Mammary epithelial cell (primary cell): ENCODE measurements at regions of chr6 and their contacts with region 1.

Region 1: DNA sequence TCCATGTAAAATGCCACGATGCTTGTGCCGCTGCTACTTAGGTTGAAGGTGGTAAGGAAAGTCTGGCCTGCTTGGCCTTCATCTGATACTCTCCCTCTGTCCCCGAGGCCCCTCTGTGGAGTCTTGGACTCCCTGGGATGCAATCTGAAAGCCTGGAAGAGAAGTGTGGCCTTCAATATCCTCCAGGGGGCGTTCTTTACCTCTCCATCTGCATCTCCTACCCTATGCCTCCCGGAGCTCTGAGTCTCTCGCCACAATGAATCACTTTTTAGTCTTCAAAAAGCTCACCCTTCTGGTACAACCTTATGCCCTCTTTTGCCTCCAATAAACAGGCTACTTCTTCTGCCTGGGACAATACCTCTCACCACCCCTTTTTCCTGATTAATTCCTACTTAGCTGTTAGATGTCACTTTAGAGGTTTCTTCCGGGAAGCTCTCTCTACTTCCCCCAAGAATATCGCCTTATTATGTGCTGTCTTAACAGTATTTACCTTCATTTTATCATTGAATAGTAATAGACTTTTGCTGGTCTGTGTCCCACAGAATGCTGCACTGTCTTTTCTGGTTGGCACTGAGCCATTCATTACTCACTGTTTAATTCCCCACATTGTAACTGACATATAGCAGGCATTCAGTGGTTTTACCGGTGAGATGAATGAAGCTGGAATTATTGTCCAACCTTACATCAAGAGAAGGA is 13.9 kb upstream of the ATG5 start:
- DNase-seq: peak; percentile 86
- H3K4me3 ChIP-seq: no peak overlapping the region
- H3K27ac ChIP-seq: peak overlapping the region; percentile 13
- H3K4me1 ChIP-seq: peaks cover 13% of the 10 kb centered on the region
- H3K27me3 ChIP-seq: no peaks in the 10 kb centered on the region
- CTCF ChIP-seq: peak; percentile 82 to 91

Region 2: DNA sequence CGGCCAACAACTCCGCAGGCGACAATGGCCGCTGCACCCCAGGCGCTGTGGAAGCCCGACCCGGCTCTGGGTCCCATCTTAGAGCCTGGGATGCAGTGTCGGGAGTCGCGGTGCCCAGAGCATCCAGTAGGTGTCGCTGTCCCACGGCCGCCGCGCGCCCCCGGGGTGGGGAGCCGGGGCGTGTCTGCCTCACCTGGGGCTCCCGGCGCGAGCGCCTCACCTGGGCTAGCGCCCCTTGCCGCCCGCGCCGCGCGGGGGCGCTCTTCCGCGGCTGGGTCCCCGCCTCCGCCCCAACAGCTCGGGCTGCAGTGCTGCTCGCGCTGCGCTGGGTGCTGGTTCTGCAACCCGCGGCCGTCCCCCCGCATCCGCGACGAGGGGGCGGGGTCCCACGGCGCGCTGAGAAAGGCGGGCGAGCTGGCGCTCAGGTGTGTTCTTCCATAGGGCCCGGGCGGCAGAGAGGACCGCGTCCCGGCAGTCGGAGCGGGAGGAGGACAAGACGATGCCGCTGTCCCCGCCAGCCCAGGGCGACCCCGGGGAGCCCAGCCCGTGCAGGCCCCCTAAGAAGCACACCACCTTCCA is 21.0 kb after region 1 on chr6 and contains the start of gene CRYBG1:
- CTCF ChIA-PET with region 1: interaction called, 13 read pairs
- dilution Hi-C with region 1: no loop called
- in situ Hi-C with region 1: no loop called
- intact Hi-C with region 1: loop called (anchors 1 kb)
- DNase-seq: peak; percentile 91
- H3K4me3 ChIP-seq: peak within 1 kb of the TSS; percentile 82 to 94 (median 92)
- H3K27ac ChIP-seq: peak within 1 kb of the TSS; percentile 68
- H3K4me1 ChIP-seq: peaks cover 14% of the 10 kb centered on the region
- H3K27me3 ChIP-seq: no peaks in the 10 kb centered on the region
- CTCF ChIP-seq: peak; percentile 71 to 89
- total RNA-seq, gene CRYBG1: 78.5 to 92.9 TPM

Region 3: GRCh38 chr6:106397431-106397830 is 57.9 kb after region 1 on chr6:
- CTCF ChIA-PET with region 1: no interaction called
- dilution Hi-C with region 1: no loop called
- in situ Hi-C with region 1: no loop called
- intact Hi-C with region 1: no loop called
- DNase-seq: no peak
- H3K4me3 ChIP-seq: no peak overlapping the region
- H3K27ac ChIP-seq: no peak overlapping the region
- H3K4me1 ChIP-seq: no peaks in the 10 kb centered on the region
- H3K27me3 ChIP-seq: no peaks in the 10 kb centered on the region
- CTCF ChIP-seq: no peak

Region 4: DNA sequence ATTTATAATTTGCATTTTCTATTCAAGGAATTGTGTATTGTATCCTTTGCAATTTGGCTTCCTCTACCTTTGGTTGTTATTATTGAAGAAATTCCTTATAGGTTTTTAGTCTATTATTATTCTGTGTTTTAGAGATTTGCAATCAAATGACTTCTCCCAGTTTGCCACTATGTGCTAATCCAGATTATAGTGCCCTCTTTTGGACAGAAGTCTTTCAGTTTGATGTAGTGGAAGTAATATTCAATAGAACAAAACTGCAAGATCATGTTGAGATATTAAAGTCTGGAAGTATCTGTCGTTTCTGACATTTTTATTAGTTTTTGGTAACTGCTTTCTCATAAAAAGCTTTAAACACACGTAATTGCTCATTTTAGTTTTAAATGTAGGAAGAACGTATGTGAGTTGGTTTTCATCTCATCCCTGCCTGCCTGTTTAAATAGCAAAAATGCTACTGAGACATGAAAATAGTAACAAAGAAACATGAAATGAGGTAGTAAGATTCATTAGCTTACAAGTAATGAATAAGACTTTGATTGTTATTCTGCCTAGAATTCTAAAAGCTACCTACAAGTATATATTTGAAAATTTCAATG is 217.0 kb after region 1 on chr6:
- CTCF ChIA-PET with region 1: no interaction called
- dilution Hi-C with region 1: no loop called
- in situ Hi-C with region 1: loop called (anchors 10 kb)
- intact Hi-C with region 1: no loop called
- DNase-seq: no peak
- H3K4me3 ChIP-seq: no peak overlapping the region
- H3K27ac ChIP-seq: no peak overlapping the region
- H3K4me1 ChIP-seq: peaks cover 26% of the 10 kb centered on the region
- H3K27me3 ChIP-seq: no peaks in the 10 kb centered on the region
- CTCF ChIP-seq: peak in 1 of 2 donors; percentile 47

Region 5: DNA sequence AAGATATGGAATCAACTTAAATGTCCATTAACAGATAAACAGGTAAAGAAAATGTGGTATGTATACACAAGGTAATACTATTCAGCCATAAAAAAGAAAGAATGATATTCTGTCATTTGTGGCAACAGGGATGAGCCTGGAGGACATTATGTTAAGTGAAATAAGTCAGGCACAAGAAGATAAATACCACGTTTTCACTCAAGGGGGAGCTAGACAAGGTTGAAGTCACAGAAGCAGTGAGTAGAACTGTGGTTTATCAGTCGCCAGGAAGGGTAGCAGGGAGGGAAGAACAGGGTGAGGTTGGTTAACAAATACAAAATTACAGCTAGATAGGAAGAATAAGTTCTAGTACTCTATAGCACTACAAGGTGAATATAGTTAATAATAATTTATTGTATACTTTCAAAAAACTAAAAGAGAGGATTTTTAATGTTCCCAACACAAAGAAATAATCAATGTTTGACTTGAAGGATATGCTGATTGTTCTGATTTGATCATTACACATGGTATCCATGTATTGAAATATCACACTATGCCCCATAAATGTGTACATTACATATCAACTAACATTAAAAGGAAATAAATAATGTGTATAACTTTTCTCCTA is 268.7 kb after region 1 on chr6:
- CTCF ChIA-PET with region 1: no interaction called
- dilution Hi-C with region 1: no loop called
- in situ Hi-C with region 1: no loop called
- intact Hi-C with region 1: loop called (anchors 2 kb)
- DNase-seq: peak; percentile 66
- H3K4me3 ChIP-seq: no peak overlapping the region
- H3K27ac ChIP-seq: no peak overlapping the region
- H3K4me1 ChIP-seq: no peaks in the 10 kb centered on the region
- H3K27me3 ChIP-seq: no peaks in the 10 kb centered on the region
- CTCF ChIP-seq: peak; percentile 64 to 77

Region 6: DNA sequence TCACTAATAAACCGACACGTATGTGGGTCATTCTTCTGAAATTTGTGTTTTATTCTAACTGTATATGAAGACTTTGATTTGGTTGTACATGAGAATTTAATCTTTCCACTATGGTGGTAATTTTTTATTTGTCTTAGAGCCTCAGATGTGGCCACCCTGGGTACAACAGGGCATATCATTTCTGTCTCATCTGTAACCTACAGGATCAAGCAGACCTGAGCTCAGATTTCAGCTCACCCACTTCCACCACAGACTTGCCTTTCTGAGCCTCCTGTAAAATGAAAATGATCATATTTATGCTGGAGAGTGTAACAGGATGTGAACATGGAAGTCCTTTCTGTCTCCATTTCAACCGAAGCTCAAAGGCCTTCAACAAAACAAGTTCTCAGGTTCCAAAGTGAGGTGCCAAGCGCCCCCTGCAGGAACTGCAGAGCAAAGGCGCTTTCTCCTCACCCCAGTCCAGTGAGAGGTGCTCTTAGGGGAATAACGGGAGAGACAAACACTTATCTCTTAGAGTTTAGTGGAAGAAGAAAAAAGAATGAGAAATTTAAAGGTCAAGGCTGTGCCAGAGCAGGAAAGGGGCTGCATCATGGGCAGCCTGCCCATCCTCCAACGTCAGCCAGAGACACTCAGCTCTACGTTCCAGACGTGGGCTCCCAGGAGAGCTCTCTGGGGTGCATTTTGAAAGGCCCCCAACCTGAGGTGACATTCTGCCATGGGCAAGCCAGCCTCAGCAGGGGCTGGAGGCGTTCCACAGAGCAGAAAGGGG is 658.1 kb after region 1 on chr6:
- CTCF ChIA-PET with region 1: interaction called, 3 read pairs
- dilution Hi-C with region 1: no loop called
- in situ Hi-C with region 1: loop called (anchors 10 kb)
- intact Hi-C with region 1: loop called (anchors 2 kb)
- DNase-seq: peak; percentile 49
- H3K4me3 ChIP-seq: no peak overlapping the region
- H3K27ac ChIP-seq: no peak overlapping the region
- H3K4me1 ChIP-seq: no peaks in the 10 kb centered on the region
- H3K27me3 ChIP-seq: no peaks in the 10 kb centered on the region
- CTCF ChIP-seq: peak; percentile 95 to 96

Region 7: DNA sequence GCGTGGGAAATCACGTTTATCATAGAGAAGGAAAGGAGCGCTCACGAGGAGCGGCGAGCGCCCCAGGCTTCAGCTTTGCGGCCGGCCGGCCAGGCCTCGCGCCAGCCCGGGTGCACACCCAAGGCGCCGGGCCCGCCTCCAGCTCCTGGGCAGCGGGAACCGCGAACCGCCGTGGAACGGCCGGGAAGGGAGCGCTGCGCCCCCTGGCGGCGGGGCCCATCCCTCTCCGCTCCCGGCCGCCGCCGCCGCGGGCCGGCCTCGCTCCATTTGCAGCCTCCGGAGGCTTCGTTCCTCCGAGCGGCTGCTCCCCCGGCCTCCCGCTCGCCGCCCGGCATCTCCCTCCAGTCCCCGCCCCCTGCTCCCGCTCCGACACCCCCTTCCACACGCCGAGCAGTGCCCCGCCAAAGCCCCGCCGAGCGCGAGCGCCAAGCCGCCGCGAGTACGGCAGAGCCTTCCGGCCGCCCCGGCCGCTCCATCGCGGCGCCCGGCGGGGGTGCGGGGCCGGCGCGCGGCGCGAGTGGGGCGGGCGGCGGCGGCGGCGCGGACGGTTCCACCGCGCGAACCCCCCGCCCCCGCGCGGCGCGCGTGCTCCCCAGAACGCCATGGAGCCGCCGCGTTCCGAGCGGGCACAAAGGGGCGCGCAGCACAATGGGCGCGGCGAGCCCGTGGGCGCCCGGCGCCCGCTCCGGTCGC is 774.9 kb after region 1 on chr6:
- CTCF ChIA-PET with region 1: no interaction called
- dilution Hi-C with region 1: no loop called
- in situ Hi-C with region 1: no loop called
- intact Hi-C with region 1: loop called (anchors 1 kb)
- DNase-seq: peak; percentile 84
- H3K4me3 ChIP-seq: peak overlapping the region; percentile 29 to 68 (median 64)
- H3K27ac ChIP-seq: peak overlapping the region; percentile 28
- H3K4me1 ChIP-seq: peaks cover 21% of the 10 kb centered on the region
- H3K27me3 ChIP-seq: no peaks in the 10 kb centered on the region
- CTCF ChIP-seq: peak; percentile 31 to 60

Region 8: GRCh38 chr6:107847844-107848802 is 1508.6 kb after region 1 on chr6:
- CTCF ChIA-PET with region 1: no interaction called
- dilution Hi-C with region 1: no loop called
- in situ Hi-C with region 1: no loop called
- intact Hi-C with region 1: loop called (anchors 2 kb)
- DNase-seq: peak; percentile 66
- H3K4me3 ChIP-seq: peak overlapping the region; percentile 11 to 48 (median 40)
- H3K27ac ChIP-seq: no peak overlapping the region
- H3K4me1 ChIP-seq: peaks cover 12% of the 10 kb centered on the region
- H3K27me3 ChIP-seq: no peaks in the 10 kb centered on the region
- CTCF ChIP-seq: peak; percentile 59 to 91